Activated naive CD4-positive, alpha-beta T cell treated with anti-CD3 and anti-CD28 coated beads for 36 hours (primary cell): ENCODE measurements at regions of chr19 and their contacts with region 1.

Region 1: DNA sequence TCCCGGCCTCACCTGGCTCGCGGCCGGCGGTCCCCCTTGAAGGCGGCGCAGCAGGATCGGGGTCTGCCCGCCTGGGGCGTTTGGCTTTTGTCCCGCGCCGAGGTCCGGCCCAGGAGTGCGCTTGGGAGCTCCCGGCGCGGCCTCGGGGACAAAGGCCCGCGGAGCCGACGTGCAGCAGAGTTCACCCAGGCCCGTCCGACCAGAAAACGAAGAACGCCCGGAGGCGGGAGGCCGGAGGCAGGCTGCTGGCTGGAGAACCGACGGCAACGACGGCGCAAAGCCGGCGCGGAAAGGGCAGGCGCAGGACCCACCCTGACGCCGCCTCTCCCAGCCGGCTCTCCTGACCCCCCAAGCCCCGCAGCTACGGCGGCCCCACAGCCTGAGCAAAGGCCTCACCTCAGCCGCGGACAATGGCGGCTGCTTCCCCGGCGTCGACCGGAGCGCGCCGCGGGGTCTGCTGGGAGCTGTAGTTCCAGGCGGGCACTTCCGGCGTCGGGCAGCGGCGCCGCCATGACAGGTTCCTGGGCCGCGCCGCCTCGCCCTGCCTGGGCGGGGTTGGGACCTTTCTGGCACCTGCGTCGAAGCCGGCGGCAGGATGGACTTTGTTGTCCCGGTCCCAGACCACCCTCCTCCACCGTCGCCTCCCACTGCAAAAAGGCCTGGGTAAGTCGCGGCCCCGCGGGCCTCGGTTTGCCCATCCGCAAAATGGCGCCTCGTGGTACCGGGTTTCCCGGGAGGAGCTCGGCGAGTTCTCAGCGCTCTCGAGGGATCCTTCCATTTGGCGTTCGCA is at the start of gene ZNF606:
- DNase-seq: peak; percentile 86
- H3K4me3 Mint-ChIP-seq: peak within 1 kb of the TSS; percentile 81
- H3K27ac Mint-ChIP-seq: peak within 1 kb of the TSS; percentile 79
- H3K4me1 Mint-ChIP-seq: peaks cover 29% of the 10 kb centered on the region
- H3K27me3 Mint-ChIP-seq: no peaks in the 10 kb centered on the region
- total RNA-seq, gene ZNF606: 4.5 to 4.7 TPM

Region 2: GRCh38 chr19:57191141-57192076 is 811.2 kb before region 1 on chr19 and contains the start of gene ZNF264:
- CTCF ChIA-PET with region 1: no interaction called
- intact Hi-C with region 1: loop called (anchors 5 kb)
- DNase-seq: peak; percentile 90
- H3K4me3 Mint-ChIP-seq: peak within 1 kb of the TSS; percentile 93
- H3K27ac Mint-ChIP-seq: peak within 1 kb of the TSS; percentile 82
- H3K4me1 Mint-ChIP-seq: peaks cover 20% of the 10 kb centered on the region
- H3K27me3 Mint-ChIP-seq: peaks cover 5% of the 10 kb centered on the region
- total RNA-seq, gene ZNF264: 18.4 to 18.5 TPM

Region 3: GRCh38 chr19:57819475-57820148 is 183.0 kb before region 1 on chr19:
- CTCF ChIA-PET with region 1: no interaction called
- intact Hi-C with region 1: no loop called
- DNase-seq: peak; percentile 89
- H3K4me3 Mint-ChIP-seq: peak overlapping the region; percentile 99
- H3K27ac Mint-ChIP-seq: peak overlapping the region; percentile 96
- H3K4me1 Mint-ChIP-seq: peaks cover 50% of the 10 kb centered on the region
- H3K27me3 Mint-ChIP-seq: no peaks in the 10 kb centered on the region

Region 4: GRCh38 chr19:57888560-57889231 is 113.9 kb before region 1 on chr19 and contains the start of gene ZNF814:
- CTCF ChIA-PET with region 1: no interaction called
- intact Hi-C with region 1: loop called (anchors 1 kb)
- DNase-seq: peak; percentile 91
- H3K4me3 Mint-ChIP-seq: peak within 1 kb of the TSS; percentile 86
- H3K27ac Mint-ChIP-seq: peak within 1 kb of the TSS; percentile 72
- H3K4me1 Mint-ChIP-seq: peaks cover 21% of the 10 kb centered on the region
- H3K27me3 Mint-ChIP-seq: no peaks in the 10 kb centered on the region
- total RNA-seq, gene ZNF814: 12.7 to 13.3 TPM

Region 5: DNA sequence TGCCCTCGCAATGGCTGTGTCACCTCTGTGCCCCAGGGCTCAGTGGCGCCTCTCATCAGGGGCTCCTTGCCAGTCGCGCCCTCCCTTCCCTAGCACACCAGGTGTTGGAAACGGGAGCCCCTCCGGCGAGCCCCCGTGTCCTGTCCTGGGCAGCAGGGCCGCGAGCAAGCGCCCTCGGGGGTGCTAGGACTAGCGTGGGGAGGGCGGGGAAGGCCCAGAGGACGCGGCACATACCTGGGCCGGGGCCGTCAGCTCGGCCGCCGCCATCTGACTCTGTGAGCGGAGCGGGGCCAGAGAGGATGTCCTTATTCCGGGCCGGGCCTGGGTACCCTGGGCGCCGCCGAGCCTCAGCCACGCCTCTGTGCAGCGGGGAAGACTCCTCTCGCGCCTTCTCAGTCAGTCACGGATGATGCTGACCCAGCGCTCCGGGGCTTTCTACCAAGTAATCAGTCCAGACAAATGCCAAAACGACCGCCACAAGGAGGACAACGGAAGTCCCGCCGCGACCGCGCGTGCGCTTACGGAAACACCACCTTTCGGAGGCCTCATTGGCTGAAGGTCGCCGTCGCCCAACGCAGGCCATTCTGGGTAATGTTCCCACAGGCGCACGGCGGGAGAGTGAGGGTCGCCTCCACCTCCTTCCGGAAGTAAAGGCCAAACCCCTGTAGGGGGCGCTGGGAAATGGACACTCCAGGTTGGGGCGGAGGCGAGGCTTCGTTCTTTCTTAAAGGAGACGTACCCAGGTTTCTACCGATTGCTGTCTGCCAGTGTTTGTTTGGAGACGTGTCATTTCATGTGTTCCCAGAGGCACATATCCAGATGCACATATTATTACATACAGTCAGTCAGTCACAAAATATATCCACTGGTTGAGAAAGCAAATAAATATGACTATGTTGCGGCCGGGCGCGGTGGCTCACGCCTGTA is 55.1 kb before region 1 on chr19 and contains the start of gene ZNF256:
- CTCF ChIA-PET with region 1: no interaction called
- intact Hi-C with region 1: loop called (anchors 2 kb)
- DNase-seq: peak; percentile 93
- H3K4me3 Mint-ChIP-seq: peak within 1 kb of the TSS; percentile 91
- H3K27ac Mint-ChIP-seq: peak within 1 kb of the TSS; percentile 87
- H3K4me1 Mint-ChIP-seq: peaks cover 17% of the 10 kb centered on the region
- H3K27me3 Mint-ChIP-seq: no peaks in the 10 kb centered on the region
- total RNA-seq, gene ZNF256: 4.4 to 4.7 TPM

Region 6: DNA sequence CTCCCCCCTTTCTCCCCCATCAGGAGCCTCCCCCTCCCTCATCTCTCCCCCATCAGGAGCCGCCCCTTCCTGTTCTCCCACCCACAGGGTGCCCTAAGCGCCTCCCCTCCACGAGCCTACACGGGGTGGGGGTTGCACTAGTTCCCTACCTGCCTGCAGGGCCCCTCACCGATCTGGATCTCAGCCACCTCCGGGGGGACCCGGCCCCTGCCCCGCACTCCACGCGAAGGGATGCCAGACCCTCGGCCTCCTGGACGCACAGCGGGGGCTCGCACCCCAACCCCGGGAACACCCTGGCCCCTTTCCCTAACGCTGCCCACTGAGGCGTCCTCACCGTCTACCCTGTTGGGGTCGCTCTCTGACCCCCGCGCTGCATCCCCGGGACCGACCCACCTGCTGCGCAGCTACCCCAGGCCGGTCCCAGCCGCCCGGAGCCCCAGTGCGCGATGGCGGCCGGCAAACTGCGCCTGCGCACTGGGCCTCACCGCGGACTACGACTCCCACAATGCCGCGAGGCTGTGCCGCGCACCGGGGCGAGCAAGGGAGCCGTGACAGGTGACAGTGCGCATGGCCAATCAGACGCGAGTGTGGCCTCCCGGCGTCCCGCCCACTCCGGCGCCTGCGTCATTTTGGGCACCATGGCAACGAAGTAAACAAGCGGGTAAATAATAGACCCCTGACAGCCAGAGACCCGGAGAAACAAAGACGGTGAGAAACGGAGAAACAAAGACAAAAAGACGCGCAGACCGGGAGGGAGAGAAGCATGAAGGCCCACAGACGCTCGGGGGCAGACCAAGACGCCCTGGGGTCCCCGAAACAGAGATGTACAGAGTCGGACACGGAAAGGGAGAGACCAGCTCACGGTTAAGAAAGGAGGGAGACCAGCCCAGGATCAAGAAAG is 95.5 kb after region 1 on chr19 and contains the start of gene ZSCAN18:
- CTCF ChIA-PET with region 1: no interaction called
- intact Hi-C with region 1: loop called (anchors 1 kb)
- DNase-seq: peak; percentile 95
- H3K4me3 Mint-ChIP-seq: peak within 1 kb of the TSS; percentile 85
- H3K27ac Mint-ChIP-seq: peak within 1 kb of the TSS; percentile 93
- H3K4me1 Mint-ChIP-seq: peaks cover 14% of the 10 kb centered on the region
- H3K27me3 Mint-ChIP-seq: no peaks in the 10 kb centered on the region
- total RNA-seq, gene ZSCAN18: 25.7 to 26.1 TPM